ENCODE measurements at regions of chr20 and their contacts with region 1.

Region 1: DNA sequence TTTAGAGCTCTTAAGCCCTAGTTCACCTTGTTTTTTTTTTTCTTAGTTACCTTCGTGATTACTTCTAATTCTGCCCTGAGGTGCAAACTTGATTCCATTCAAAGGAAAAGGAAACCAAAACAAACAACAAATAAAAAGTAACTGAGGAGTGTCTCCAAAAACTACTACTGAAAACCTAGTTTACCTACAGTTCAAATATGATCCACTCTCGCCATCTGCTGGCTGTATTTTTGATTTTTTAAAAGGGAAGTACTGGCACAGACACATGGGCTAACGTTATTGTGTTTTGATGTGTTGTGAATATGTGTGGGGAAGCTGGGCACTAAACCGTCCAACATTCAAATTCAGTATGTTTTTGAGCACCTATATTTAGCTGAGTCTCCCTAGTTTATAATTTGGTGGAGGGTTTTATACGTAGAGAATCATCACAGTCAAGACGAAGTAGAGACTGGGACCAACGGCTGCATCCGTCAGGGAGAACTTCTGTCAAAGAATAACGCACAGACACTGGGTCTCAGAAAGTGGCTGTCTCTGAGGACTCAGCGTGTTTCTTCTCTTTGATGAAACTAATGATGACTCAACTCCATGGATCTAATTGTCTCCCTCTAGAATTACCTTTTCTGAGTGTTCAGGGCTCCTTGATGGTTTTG is 373.5 kb upstream of the BTBD3 start:
- DNase-seq: peak; percentile 72
- ATAC-seq: peak; percentile 88
- H3K4me3 ChIP-seq: no peak overlapping the region
- H3K27ac ChIP-seq: no peak overlapping the region
- H3K4me1 ChIP-seq: peaks cover 12% of the 10 kb centered on the region
- H3K27me3 ChIP-seq: no peaks in the 10 kb centered on the region; a peak in 1 of 5 replicates
- CTCF ChIP-seq: peak; percentile 85
- EP300 ChIP-seq: no peak
- POLR2A ChIP-seq: no peak
- RAD21 ChIP-seq: peak; percentile 41; the same call in 1 of the 2 replicates

Region 2: GRCh38 chr20:9989066-9989724 is 1555.0 kb before region 1 on chr20:
- CTCF ChIA-PET with region 1: no interaction called
- POLR2A ChIA-PET with region 1: no interaction called
- in situ Hi-C with region 1: loop called (anchors 10 kb)
- intact Hi-C with region 1: no loop called
- DNase-seq: no peak
- ATAC-seq: no peak
- H3K4me3 ChIP-seq: no peak overlapping the region
- H3K27ac ChIP-seq: no peak overlapping the region
- H3K4me1 ChIP-seq: no peaks in the 10 kb centered on the region
- H3K27me3 ChIP-seq: no peaks in the 10 kb centered on the region; a peak in 1 of 5 replicates
- CTCF ChIP-seq: no peak
- EP300 ChIP-seq: no peak
- POLR2A ChIP-seq: no peak
- RAD21 ChIP-seq: no peak

Region 3: DNA sequence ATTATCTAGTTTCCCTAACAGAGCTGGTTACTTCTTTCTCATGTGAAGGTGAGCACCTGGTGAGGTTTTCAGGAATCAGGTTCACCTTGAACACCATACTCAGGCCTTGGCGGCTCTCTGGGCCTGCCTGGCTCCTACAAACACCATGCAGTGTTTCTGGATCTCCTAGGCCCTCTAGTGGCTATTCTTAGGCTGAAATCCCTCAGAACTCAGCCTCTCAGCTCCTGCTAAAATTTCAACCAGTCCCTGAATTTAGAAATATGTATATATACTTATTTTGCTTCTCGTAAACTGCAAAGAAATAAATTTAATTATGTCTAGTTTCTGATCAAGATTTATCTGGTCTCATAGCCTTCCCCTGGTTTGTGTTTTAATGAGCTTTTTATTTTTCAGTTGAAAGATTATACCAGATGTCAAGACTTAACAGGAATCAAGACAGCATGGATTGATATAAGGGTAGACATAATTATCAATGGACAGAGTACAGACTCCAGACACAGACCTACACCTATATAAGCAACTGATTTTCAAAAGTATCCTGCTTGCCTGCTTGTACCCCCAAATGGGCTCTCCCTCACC is 1453.5 kb before region 1 on chr20:
- CTCF ChIA-PET with region 1: no interaction called
- POLR2A ChIA-PET with region 1: no interaction called
- in situ Hi-C with region 1: loop called (anchors 25 kb)
- intact Hi-C with region 1: loop called (anchors 1 kb)
- DNase-seq: peak; percentile 63
- ATAC-seq: peak; percentile 99
- H3K4me3 ChIP-seq: no peak overlapping the region
- H3K27ac ChIP-seq: no peak overlapping the region
- H3K4me1 ChIP-seq: no peaks in the 10 kb centered on the region
- H3K27me3 ChIP-seq: no peaks in the 10 kb centered on the region
- CTCF ChIP-seq: peak; percentile 84
- EP300 ChIP-seq: no peak
- POLR2A ChIP-seq: no peak
- RAD21 ChIP-seq: peak; percentile 78

Region 4: GRCh38 chr20:10427060-10427692 is 1117.0 kb before region 1 on chr20:
- CTCF ChIA-PET with region 1: no interaction called
- POLR2A ChIA-PET with region 1: no interaction called
- in situ Hi-C with region 1: loop called (anchors 25 kb)
- intact Hi-C with region 1: loop called (anchors 5 kb)
- DNase-seq: peak; percentile 71
- ATAC-seq: peak; percentile 42; the same call in 1 of the 3 replicates
- H3K4me3 ChIP-seq: no peak overlapping the region
- H3K27ac ChIP-seq: no peak overlapping the region
- H3K4me1 ChIP-seq: peaks cover 65% of the 10 kb centered on the region
- H3K27me3 ChIP-seq: no peaks in the 10 kb centered on the region
- CTCF ChIP-seq: peak; percentile 83
- EP300 ChIP-seq: no peak
- POLR2A ChIP-seq: no peak
- RAD21 ChIP-seq: peak; percentile 84

Region 5: DNA sequence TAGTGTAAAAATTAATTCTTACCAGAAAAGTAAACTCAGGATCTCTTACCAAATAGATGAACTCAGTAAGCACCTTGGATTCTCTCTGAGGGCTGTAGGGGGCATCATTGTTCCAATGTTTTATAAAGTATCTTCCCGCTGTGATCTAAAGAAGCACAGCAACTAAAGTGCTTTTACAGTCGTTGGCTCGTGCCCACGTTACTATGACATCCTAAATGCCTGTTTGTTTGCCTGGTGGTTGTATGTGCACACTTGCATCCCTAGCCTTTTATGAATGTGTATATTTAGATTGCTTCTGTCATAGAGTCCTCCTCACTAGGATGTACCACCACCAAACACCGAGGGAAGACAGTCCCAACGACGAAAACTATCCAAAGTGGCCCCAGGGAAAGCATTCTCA is 1074.6 kb before region 1 on chr20:
- CTCF ChIA-PET with region 1: no interaction called
- POLR2A ChIA-PET with region 1: no interaction called
- in situ Hi-C with region 1: no loop called
- intact Hi-C with region 1: loop called (anchors 5 kb)
- DNase-seq: peak; percentile 77
- ATAC-seq: peak; percentile 80
- H3K4me3 ChIP-seq: no peak overlapping the region
- H3K27ac ChIP-seq: no peak overlapping the region
- H3K4me1 ChIP-seq: peaks cover 27% of the 10 kb centered on the region
- H3K27me3 ChIP-seq: no peaks in the 10 kb centered on the region
- CTCF ChIP-seq: peak; percentile 74
- EP300 ChIP-seq: no peak
- POLR2A ChIP-seq: no peak
- RAD21 ChIP-seq: peak; percentile 65

Region 6: GRCh38 chr20:11204926-11205768 is 339.0 kb before region 1 on chr20:
- CTCF ChIA-PET with region 1: no interaction called
- POLR2A ChIA-PET with region 1: no interaction called
- in situ Hi-C with region 1: no loop called
- intact Hi-C with region 1: loop called (anchors 1 kb)
- DNase-seq: peak; percentile 71
- ATAC-seq: peak; percentile 98
- H3K4me3 ChIP-seq: no peak overlapping the region
- H3K27ac ChIP-seq: no peak overlapping the region
- H3K4me1 ChIP-seq: peaks cover 11% of the 10 kb centered on the region
- H3K27me3 ChIP-seq: no peaks in the 10 kb centered on the region
- CTCF ChIP-seq: peak; percentile 91
- EP300 ChIP-seq: no peak
- POLR2A ChIP-seq: no peak
- RAD21 ChIP-seq: peak; percentile 74

Measured in HepG2 (cell line).